Right ventricle myocardium superior (tissue), 1 donor: ENCODE measurements at regions of chr12 and their contacts with region 1.

Region 1: GRCh38 chr12:47837190-47838171 is 17.8 kb upstream of the HDAC7 start:
- DNase-seq: peak; percentile 74
- ATAC-seq: peak; percentile 89

Region 2: DNA sequence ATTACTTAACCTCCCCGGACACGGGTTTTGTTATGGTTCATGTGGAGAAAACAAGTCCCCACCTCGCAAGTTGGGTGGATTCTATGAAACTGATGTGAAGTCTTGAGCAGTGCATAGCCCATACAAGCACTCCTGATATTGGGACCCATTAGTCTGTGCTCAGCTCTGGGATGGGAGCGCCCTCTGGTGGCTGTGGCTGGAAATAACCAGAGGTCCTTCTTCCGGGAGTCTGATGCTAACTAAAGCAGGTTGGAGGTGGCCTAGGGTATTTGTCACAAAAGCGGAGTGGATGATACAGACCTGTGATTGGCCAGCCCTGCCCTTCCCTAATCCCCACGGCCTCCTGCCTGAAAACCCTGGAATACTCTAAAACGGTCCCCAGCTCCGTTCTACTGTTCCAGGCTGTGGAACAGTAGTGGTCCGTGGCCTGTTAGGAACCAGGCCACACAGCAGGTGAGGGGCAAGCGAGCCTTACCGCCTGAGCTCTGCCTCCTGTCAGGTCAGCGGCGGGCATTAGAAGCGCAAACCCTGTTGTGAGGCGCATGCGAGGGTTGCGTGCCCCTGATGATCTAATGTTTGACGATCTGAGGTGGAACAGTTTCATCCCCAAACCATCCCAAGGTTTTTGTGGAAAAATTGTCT is 58.1 kb before region 1 on chr12:
- intact Hi-C with region 1: loop called (anchors 5 kb)
- DNase-seq: peak; percentile 93
- ATAC-seq: peak; percentile 76

Region 3: DNA sequence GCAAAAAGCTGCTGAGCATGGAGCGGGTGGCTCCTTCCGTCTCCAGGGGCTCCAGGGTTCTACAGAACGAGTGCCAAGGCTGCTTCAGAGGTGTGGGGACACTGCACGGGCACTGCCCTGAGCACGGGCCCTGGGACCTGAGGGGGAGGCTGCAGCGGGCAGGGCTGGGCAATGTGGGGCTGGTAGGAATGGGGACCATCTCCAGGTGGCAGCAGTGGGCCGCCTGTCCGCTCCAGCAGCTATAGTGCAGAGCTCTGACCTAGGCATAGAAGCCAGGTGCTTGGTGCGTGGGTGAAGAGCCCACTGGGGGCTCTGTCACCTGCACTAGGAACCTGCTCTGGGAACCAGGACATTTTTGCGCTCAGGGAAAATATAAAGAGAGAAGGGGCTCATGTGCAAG is 40.0 kb before region 1 on chr12:
- intact Hi-C with region 1: loop called (anchors 2 kb)
- DNase-seq: no peak
- ATAC-seq: peak; percentile 33